ENCODE measurements at regions of chr11 and their contacts with region 1.

Region 1: GRCh38 chr11:116691771-116692177 is 81.0 kb downstream of the BUD13 start:
- DNase-seq: peak in 7 of 9 donors; percentile 27 to 52 (median 47)
- ATAC-seq: peak; percentile 70
- H3K4me3 ChIP-seq: no peak overlapping the region
- H3K4me3 Mint-ChIP-seq: no peak overlapping the region
- H3K27ac ChIP-seq: no peak overlapping the region
- H3K27ac Mint-ChIP-seq: peak overlapping the region in 1 of 9 donors; percentile 20
- H3K4me1 ChIP-seq: no peaks in the 10 kb centered on the region
- H3K4me1 Mint-ChIP-seq: peaks cover 0 to 2% (median 0%) of the 10 kb centered on the region in 7 donors
- H3K27me3 ChIP-seq: no peaks in the 10 kb centered on the region
- H3K27me3 Mint-ChIP-seq: peaks cover 0 to 20% (median 5%) of the 10 kb centered on the region in 5 donors

Region 2: DNA sequence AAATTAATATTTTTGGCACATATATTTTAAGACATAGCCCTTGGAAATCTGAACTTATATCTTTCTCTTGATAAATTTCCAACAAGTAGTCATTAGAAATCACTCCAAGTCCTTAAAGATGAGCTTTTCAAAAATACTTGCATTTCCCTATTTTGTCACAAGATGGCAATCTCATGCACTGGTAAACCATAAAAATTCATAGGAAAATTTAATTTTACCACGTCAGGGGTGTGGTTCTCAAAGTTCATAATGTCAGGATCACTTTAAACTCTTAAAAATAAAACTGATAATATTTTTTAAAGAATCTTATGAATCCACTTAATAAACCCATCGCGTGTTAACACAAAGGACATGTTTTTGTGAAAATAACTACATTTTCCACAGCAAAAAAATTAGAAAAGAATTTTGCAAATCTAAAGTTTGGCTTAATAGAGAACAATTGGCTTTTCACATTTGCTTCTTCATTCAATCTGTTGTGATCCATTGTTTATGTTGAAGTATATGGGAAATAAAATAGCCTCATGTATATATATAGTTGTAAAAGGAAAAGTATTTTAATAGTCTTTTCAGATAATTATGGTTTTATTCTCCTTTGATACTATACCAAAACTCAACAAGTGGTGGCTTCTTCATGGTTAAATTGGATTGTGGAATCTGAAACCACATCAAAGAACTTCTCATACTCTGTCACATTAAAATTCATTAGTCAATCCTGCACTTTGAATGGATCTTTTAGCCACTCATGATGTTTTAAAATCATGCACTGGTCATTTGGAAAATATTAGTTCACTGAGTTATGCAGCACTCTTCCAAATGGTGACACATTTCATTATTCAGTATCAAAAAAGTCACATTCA is 1356.6 kb before region 1 on chr11:
- CTCF ChIA-PET with region 1: interaction called, 4 read pairs
- POLR2A ChIA-PET with region 1: no interaction called
- intact Hi-C with region 1: loop called in 1 of 2 experiments (anchors 10 kb)
- DNase-seq: peak in 1 of 9 donors; percentile 0
- ATAC-seq: no peak
- H3K4me3 ChIP-seq: no peak overlapping the region
- H3K4me3 Mint-ChIP-seq: no peak overlapping the region
- H3K27ac ChIP-seq: no peak overlapping the region
- H3K27ac Mint-ChIP-seq: no peak overlapping the region
- H3K4me1 ChIP-seq: no peaks in the 10 kb centered on the region
- H3K4me1 Mint-ChIP-seq: no peaks in the 10 kb centered on the region
- H3K27me3 ChIP-seq: no peaks in the 10 kb centered on the region
- H3K27me3 Mint-ChIP-seq: peaks cover 0 to 10% (median 4%) of the 10 kb centered on the region in 5 donors

Region 3: GRCh38 chr11:116217006-116217405 is 474.8 kb before region 1 on chr11:
- CTCF ChIA-PET with region 1: no interaction called
- POLR2A ChIA-PET with region 1: no interaction called
- intact Hi-C with region 1: loop called in 1 of 2 experiments (anchors 5 kb)
- DNase-seq: peak in 1 of 9 donors; percentile 22
- ATAC-seq: no peak
- H3K4me3 ChIP-seq: no peak overlapping the region
- H3K4me3 Mint-ChIP-seq: no peak overlapping the region
- H3K27ac ChIP-seq: no peak overlapping the region
- H3K27ac Mint-ChIP-seq: no peak overlapping the region
- H3K4me1 ChIP-seq: no peaks in the 10 kb centered on the region
- H3K4me1 Mint-ChIP-seq: no peaks in the 10 kb centered on the region
- H3K27me3 ChIP-seq: no peaks in the 10 kb centered on the region
- H3K27me3 Mint-ChIP-seq: peaks cover 0 to 12% (median 4%) of the 10 kb centered on the region in 5 donors

Region 4: DNA sequence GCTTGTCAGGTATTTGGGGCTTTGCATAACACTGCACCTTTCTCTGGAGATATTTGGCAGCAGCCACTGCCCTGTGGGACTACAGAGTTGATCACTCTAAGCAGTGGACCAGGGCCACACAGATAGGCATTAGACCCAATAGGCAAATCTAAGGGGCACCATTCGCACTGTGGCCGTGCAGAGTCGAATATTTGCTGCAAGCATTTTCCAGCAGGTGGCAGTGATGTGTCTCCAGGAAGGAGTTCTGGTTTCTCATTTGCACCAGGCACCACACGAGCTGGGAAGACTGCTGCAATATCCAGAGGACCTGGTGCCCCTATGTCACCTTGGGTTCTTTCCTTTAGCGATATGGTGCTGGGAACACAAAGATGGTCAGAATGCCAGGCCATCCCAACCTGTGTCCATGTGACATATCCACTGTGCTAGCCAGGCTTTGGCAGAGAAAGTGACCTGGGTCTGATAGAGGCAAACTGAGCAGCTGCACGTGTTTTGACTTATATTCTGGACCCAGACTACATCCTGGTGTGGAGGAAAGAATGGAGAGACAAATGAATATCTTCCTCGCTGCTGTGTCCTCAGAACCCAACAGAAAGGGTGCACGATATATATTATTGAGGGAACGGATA is 237.6 kb before region 1 on chr11:
- CTCF ChIA-PET with region 1: no interaction called
- POLR2A ChIA-PET with region 1: no interaction called
- intact Hi-C with region 1: loop called in 1 of 2 experiments (anchors 2 kb)
- DNase-seq: no peak
- ATAC-seq: no peak
- H3K4me3 ChIP-seq: no peak overlapping the region
- H3K4me3 Mint-ChIP-seq: no peak overlapping the region
- H3K27ac ChIP-seq: no peak overlapping the region
- H3K27ac Mint-ChIP-seq: no peak overlapping the region
- H3K4me1 ChIP-seq: no peaks in the 10 kb centered on the region
- H3K4me1 Mint-ChIP-seq: peaks cover 0 to 1% (median 0%) of the 10 kb centered on the region in 7 donors
- H3K27me3 ChIP-seq: no peaks in the 10 kb centered on the region
- H3K27me3 Mint-ChIP-seq: peaks cover 5 to 22% (median 12%) of the 10 kb centered on the region in 5 donors

Region 5: GRCh38 chr11:116467807-116468206 is 224.0 kb before region 1 on chr11:
- CTCF ChIA-PET with region 1: no interaction called
- POLR2A ChIA-PET with region 1: no interaction called
- intact Hi-C with region 1: no loop called
- DNase-seq: no peak
- ATAC-seq: no peak
- H3K4me3 ChIP-seq: no peak overlapping the region
- H3K4me3 Mint-ChIP-seq: no peak overlapping the region
- H3K27ac ChIP-seq: no peak overlapping the region
- H3K27ac Mint-ChIP-seq: no peak overlapping the region
- H3K4me1 ChIP-seq: no peaks in the 10 kb centered on the region
- H3K4me1 Mint-ChIP-seq: no peaks in the 10 kb centered on the region
- H3K27me3 ChIP-seq: no peaks in the 10 kb centered on the region
- H3K27me3 Mint-ChIP-seq: peaks cover 5 to 33% (median 24%) of the 10 kb centered on the region in 5 donors

Region 6: DNA sequence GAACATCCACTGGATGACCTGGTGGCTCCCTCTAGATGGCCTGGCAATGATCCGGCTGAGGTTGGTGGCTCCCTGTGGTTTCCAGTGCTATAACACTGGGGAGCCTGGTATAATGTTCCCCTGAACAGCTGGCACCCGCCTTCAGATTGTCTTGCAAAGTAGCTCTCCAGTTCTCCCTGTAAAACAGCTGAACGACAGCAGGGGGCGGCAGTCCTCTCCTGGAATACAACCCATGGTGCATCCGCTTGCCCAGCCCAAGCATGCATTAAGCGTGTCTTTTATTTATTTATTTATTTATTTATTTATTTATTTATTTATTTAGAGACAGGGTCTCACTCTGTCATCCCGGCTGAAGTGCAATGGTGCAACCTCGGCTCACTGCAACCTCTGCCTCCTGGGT is 177.9 kb before region 1 on chr11:
- CTCF ChIA-PET with region 1: no interaction called
- POLR2A ChIA-PET with region 1: no interaction called
- intact Hi-C with region 1: loop called in 1 of 2 experiments (anchors 5 kb)
- DNase-seq: no peak
- ATAC-seq: no peak
- H3K4me3 ChIP-seq: no peak overlapping the region
- H3K4me3 Mint-ChIP-seq: no peak overlapping the region
- H3K27ac ChIP-seq: no peak overlapping the region
- H3K27ac Mint-ChIP-seq: no peak overlapping the region
- H3K4me1 ChIP-seq: no peaks in the 10 kb centered on the region
- H3K4me1 Mint-ChIP-seq: peaks cover 0 to under 1% (median 0%) of the 10 kb centered on the region in 7 donors
- H3K27me3 ChIP-seq: no peaks in the 10 kb centered on the region
- H3K27me3 Mint-ChIP-seq: peaks cover 4 to 65% (median 41%) of the 10 kb centered on the region in 5 donors

Measured in naive thymus-derived CD4-positive, alpha-beta T cell (primary cell).